ENCODE measurements at regions of chr19 and their contacts with region 1.

Region 1: DNA sequence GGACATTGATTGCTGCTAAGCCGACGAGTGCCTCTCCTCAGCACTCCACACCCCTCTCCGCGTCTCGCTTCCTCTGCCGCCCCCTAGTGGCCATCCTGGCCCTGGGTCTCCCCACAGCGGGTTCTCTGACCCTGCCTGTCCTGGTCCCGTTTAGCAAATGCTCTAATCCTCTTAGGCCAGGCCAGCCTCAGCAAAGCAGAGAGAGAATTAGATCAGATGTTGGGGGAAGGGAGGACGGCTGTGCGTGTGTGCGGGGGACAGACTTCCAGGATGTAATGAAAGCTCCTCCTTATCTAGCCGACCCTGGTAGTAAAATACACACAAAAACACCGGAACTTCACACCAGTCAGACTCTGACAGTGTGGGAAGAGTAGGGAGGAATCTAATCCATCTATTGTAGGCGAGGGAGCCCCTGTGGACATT is 4.5 kb downstream of the TPRX2 start:
- H3K4me3 ChIP-seq: no peak overlapping the region
- H3K27ac ChIP-seq: peak overlapping the region; percentile 46; the same call in 1 of the 2 replicates
- H3K4me1 ChIP-seq: 0 out of 2 replicates have a peak, but pooled peaks cover 4% of the 10 kb centered on the region
- CTCF ChIP-seq: peak; percentile 88

Region 2: GRCh38 chr19:47765523-47766358 is 97.8 kb before region 1 on chr19:
- CTCF ChIA-PET with region 1: interaction called, 12 read pairs
- POLR2A ChIA-PET with region 1: no interaction called
- H3K4me3 ChIP-seq: no peak overlapping the region
- H3K27ac ChIP-seq: no peak overlapping the region
- H3K4me1 ChIP-seq: no peaks in the 10 kb centered on the region
- CTCF ChIP-seq: peak; percentile 76

Region 3: DNA sequence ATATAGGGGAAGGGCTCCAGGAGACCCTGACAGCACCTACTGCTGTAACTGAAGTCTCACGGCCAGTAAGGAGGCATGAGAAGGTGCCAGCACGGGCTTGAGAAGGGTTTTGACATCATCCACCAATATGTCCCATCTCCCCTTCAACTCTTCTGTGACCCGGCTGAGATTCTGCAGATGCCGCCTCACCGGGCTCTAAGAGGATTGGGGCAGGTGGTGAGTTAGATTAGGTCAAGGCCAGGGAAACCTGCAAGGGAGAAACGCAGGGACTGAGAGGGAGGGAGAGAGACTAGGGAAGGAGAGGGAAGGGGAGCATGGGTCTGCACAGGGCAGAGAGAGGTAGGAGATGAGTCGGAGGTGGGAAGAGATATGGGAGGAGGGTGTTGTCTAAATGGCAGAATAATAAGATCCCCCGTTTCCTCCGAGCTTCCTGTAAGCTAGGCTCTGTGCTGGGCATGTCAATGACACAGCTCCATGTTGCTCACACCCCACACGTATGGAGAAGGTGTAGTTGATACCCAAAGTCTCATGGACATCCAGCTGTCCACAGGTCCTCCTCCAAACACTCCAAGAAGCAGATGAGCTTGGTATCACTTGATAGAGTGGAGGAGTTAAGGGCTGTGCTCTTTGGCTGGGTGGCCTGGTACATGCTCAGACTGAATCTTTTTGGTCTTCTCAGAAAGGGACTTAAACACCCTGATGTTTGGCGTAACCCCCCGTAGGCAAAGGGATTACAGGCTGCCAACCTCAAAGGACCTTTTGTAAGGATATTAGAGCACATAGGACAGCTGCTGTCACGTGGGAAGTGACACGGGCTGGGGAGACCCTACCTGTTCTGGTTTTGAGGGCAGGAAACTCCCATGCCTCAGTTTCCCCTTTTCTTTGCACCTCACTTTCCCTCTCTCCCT is 65.3 kb before region 1 on chr19:
- CTCF ChIA-PET with region 1: interaction called, 30 read pairs
- POLR2A ChIA-PET with region 1: no interaction called
- H3K4me3 ChIP-seq: no peak overlapping the region
- H3K27ac ChIP-seq: no peak overlapping the region
- H3K4me1 ChIP-seq: no peaks in the 10 kb centered on the region
- CTCF ChIP-seq: no peak

Region 4: DNA sequence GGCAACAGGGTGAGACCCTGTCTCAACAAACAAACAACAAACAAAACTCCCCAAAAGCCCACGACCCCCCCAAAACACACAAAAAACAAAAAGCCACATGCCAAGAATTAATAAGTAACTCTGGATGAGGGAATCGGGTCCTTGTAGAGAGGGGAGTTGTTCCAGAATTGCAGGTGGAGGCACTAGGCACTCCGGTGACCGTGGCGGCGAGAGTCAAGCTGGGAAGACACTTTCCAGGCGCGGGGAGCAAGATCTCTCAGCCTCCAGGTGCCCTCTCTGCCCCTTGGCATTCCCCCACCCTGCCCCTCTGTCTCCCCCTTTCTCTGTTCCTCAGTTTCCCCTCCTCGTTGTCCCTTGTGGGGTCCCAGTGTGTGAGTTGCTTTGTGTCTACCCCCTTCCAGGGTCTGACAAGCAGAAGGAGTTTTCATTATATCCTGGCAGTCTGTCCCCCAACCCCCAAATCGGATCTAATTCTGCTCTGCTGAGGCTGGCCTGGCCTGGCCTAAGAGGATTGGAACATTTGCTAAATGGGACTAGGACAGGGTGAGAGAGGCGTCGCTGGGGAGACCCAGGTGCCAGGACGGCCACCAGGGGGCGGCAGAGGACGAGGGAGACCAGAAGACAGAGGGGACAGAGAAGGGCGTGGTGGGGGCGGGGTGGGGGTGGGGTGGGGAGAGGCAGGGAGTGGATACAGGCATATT is 50.1 kb before region 1 on chr19:
- CTCF ChIA-PET with region 1: interaction called, 45 read pairs
- POLR2A ChIA-PET with region 1: no interaction called
- H3K4me3 ChIP-seq: no peak overlapping the region
- H3K27ac ChIP-seq: no peak overlapping the region
- H3K4me1 ChIP-seq: no peaks in the 10 kb centered on the region; the same call in 1 of the 2 replicates
- CTCF ChIP-seq: peak; percentile 28; the same call in 1 of the 2 replicates

Region 5: DNA sequence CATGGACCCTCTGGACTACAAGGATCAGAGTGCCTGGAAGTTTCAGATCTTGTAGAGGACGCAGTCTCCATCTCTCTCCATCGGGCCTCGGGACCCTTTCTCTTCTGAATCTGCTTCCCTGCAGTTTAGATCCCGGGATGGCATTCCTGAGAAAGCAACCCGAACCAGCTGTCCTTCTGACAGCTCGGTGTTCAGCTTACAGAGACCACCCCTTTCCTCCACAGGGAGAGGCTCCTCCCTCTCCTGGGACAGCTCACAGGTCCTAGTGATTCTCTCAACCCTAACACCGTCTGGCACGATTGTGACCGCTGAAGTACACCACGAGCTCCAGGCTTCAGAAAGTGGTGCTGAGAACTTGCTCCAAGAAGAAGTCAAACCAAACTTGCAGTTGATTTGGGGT is 23.6 kb before region 1 on chr19:
- CTCF ChIA-PET with region 1: interaction called, 22 read pairs
- POLR2A ChIA-PET with region 1: no interaction called
- H3K4me3 ChIP-seq: no peak overlapping the region
- H3K27ac ChIP-seq: no peak overlapping the region
- H3K4me1 ChIP-seq: no peaks in the 10 kb centered on the region
- CTCF ChIP-seq: no peak

Region 6: GRCh38 chr19:47886010-47886559 is 22.6 kb after region 1 on chr19 and contains the start of gene SULT2A1:
- CTCF ChIA-PET with region 1: interaction called, 13 read pairs
- POLR2A ChIA-PET with region 1: no interaction called
- H3K4me3 ChIP-seq: no peak within 1 kb of the TSS
- H3K27ac ChIP-seq: no peak within 1 kb of the TSS
- H3K4me1 ChIP-seq: peaks cover 18% of the 10 kb centered on the region
- CTCF ChIP-seq: no peak